GM12878 (cell line): ENCODE measurements at regions of chr6 and their contacts with region 1.

Region 1: DNA sequence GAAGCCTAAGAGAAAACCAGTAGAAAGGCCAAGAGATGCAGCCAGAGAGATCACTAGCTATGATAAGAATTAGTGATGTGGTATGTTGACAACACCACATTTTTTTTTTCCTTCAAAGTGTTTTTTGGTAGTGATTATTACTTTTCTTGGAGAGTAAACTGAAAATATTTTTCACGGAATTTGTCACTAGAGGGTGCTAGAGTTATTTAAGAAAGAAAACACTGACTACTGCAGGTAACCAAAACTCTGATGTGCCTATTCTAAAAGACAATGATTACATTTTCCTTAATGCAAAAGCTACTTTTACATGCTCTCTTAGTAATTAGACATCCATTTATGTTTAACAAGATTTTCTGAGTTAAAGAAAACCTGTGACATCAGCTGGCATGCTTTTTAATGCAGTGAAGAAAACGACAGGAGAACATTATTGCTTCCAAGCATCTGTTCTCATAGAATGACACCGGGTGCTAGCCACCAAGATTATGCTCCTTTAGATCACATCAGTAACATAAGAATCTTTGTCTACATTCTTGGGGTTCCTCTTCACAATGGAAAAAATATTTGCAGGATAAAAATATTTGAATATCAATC is 28.8 kb downstream of the RWDD2A start:
- DNase-seq: no peak
- ATAC-seq: peak; percentile 65
- H3K4me3 ChIP-seq: no peak overlapping the region
- H3K27ac ChIP-seq: no peak overlapping the region
- H3K4me1 ChIP-seq: no peaks in the 10 kb centered on the region
- H3K27me3 ChIP-seq: no peaks in the 10 kb centered on the region
- CTCF ChIP-seq: peak; percentile 32 to 61 (median 32); a peak in 2 of 6 replicates
- EP300 ChIP-seq: no peak
- POLR2A ChIP-seq: no peak
- RAD21 ChIP-seq: peak; percentile 74

Region 2: DNA sequence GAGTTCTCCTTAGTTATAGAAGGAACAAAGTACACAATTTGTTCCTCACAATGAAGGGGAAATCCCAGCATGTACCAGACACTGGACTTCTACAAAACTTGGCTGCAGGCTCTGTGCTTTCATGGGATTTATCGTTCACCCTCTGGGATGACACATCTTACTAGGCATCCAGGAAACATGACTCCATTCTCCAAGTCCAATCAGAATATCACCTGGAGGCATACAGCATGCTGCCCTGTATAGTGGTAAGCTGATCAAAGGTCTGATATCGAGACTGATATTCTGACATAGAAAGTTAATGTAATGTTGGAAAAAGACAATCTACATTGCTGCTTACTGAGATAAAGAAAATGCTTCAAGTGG is 22.1 kb before region 1 on chr6:
- CTCF ChIA-PET with region 1: interaction called, 22 read pairs
- POLR2A ChIA-PET with region 1: interaction called, 3 read pairs
- RAD21 ChIA-PET with region 1: interaction called, 3 read pairs
- SMC1A ChIA-PET with region 1: interaction called, 6 read pairs
- in situ Hi-C with region 1: no loop called
- intact Hi-C with region 1: no loop called
- DNase-seq: no peak
- ATAC-seq: no peak
- H3K4me3 ChIP-seq: no peak overlapping the region
- H3K27ac ChIP-seq: no peak overlapping the region
- H3K4me1 ChIP-seq: no peaks in the 10 kb centered on the region; the same call in 1 of the 2 replicates
- H3K27me3 ChIP-seq: no peaks in the 10 kb centered on the region
- CTCF ChIP-seq: no peak
- EP300 ChIP-seq: no peak
- POLR2A ChIP-seq: no peak
- RAD21 ChIP-seq: no peak

Region 3: GRCh38 chr6:83417880-83418663 is 196.1 kb after region 1 on chr6:
- CTCF ChIA-PET with region 1: interaction called, 7 read pairs
- POLR2A ChIA-PET with region 1: no interaction called
- RAD21 ChIA-PET with region 1: interaction called, 3 read pairs
- SMC1A ChIA-PET with region 1: interaction called, 14 read pairs
- in situ Hi-C with region 1: no loop called
- intact Hi-C with region 1: loop called (anchors 1 kb)
- DNase-seq: no peak
- ATAC-seq: peak; percentile 76
- H3K4me3 ChIP-seq: no peak overlapping the region
- H3K27ac ChIP-seq: no peak overlapping the region
- H3K4me1 ChIP-seq: no peaks in the 10 kb centered on the region
- H3K27me3 ChIP-seq: no peaks in the 10 kb centered on the region
- CTCF ChIP-seq: peak; percentile 38 to 44 (median 40); a peak in 4 of 6 replicates
- EP300 ChIP-seq: no peak
- POLR2A ChIP-seq: no peak
- RAD21 ChIP-seq: peak; percentile 58

Region 4: DNA sequence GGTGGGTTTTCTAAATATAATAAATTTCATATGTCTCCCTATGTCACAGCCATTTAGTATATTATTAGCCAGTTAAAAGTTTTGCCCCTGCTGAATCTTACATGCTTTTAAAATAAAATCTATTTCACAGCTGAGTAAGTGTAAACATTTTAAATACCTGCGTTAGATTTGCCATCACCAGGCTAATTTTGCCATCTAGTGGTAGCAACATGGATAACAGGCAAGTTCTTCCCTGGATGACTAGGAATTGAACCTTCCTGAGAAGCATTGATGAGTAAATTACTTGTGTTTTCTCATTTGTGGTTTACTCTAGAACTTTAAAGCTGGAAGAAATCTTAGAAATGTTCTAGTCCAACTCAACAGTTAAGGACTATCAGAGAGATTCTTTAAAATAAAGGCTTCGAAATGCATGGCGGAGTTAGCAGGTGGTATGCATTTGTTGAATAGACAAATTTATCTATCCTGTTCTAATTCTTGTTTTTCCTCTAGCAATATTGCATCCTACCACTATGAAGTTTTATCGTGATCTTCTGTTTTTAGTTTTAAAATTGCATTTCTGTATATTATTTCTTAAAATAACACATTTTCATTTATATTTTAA is 293.0 kb after region 1 on chr6:
- CTCF ChIA-PET with region 1: interaction called, 423 read pairs
- POLR2A ChIA-PET with region 1: interaction called, 3 read pairs
- RAD21 ChIA-PET with region 1: interaction called, 103 read pairs
- SMC1A ChIA-PET with region 1: interaction called, 158 read pairs
- in situ Hi-C with region 1: loop called (anchors 5 kb)
- intact Hi-C with region 1: loop called (anchors 1 kb)
- DNase-seq: peak; percentile 30
- ATAC-seq: peak; percentile 74
- H3K4me3 ChIP-seq: no peak overlapping the region
- H3K27ac ChIP-seq: no peak overlapping the region
- H3K4me1 ChIP-seq: no peaks in the 10 kb centered on the region
- H3K27me3 ChIP-seq: no peaks in the 10 kb centered on the region; a peak in 1 of 4 replicates
- CTCF ChIP-seq: peak; percentile 72 to 82 (median 76)
- EP300 ChIP-seq: no peak
- POLR2A ChIP-seq: no peak
- RAD21 ChIP-seq: peak; percentile 96

Region 5: DNA sequence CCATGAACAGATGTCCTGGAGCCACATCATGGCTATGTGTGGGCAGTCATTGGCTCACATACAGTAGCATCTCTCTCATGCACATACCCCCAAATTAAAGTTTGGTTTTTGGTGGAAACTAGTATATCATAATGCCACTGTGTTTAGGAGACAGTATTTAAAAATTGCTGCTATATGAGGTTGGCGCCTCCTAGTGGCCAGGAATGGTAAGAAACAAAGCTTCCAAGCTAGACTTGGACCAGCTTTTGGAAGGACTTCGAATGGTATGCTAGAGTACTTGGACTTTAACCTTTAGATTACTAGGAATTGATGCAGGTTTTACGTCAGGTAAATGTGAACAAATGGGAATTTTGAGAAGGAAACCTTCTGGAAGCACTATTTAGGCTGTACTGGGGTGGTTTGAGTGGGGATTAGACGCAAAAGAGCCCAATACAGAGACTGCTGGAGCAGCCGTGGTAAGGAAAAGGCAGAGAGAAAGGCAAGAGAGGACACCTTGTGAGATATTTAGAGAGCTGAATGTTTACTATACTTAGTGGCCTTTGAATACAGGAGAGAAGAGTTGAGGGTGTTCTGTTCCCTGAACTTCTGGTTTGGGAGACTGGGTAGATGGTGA is 314.2 kb after region 1 on chr6:
- CTCF ChIA-PET with region 1: interaction called, 19 read pairs
- POLR2A ChIA-PET with region 1: interaction called, 6 read pairs
- RAD21 ChIA-PET with region 1: interaction called, 14 read pairs
- SMC1A ChIA-PET with region 1: interaction called, 21 read pairs
- in situ Hi-C with region 1: no loop called
- intact Hi-C with region 1: no loop called
- DNase-seq: peak; percentile 8
- ATAC-seq: peak; percentile 86
- H3K4me3 ChIP-seq: no peak overlapping the region
- H3K27ac ChIP-seq: no peak overlapping the region
- H3K4me1 ChIP-seq: no peaks in the 10 kb centered on the region
- H3K27me3 ChIP-seq: no peaks in the 10 kb centered on the region
- CTCF ChIP-seq: peak; percentile 71 to 89 (median 87)
- EP300 ChIP-seq: no peak
- POLR2A ChIP-seq: no peak
- RAD21 ChIP-seq: peak; percentile 53

Region 6: DNA sequence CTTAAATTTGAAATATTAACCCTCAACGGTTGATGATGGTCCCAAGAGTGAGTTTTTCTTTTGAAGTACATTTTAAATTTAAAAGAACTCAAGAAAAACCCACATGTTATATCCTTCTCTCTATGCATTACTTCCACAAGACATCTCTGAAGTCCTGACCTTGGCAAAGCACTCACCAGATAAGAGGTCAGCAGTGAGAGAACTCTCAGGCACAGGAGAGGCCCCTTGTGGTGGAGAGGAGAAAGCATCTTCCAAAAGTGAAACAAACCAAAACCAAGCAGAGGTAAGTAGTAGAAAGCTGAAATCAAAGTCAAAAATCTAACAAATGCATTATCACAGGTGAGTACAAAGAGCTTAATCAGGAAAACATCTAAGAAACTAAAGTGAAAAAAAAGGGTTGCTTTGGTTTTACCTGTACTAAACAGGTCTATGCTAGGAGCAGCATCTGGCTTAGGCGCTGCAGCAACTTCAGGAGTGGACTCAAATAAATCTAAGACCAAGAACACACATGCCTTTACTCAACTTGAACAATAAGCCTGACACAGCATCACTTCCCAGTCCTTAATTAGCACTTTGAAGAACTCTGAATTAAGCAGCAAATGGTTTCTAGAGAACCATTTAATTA is 370.9 kb after region 1 on chr6:
- CTCF ChIA-PET with region 1: no interaction called
- POLR2A ChIA-PET with region 1: no interaction called
- RAD21 ChIA-PET with region 1: interaction called, 3 read pairs
- SMC1A ChIA-PET with region 1: interaction called, 3 read pairs
- in situ Hi-C with region 1: no loop called
- intact Hi-C with region 1: loop called (anchors 10 kb)
- DNase-seq: peak; percentile 9
- ATAC-seq: peak; percentile 99
- H3K4me3 ChIP-seq: no peak overlapping the region
- H3K27ac ChIP-seq: no peak overlapping the region
- H3K4me1 ChIP-seq: no peaks in the 10 kb centered on the region
- H3K27me3 ChIP-seq: no peaks in the 10 kb centered on the region
- CTCF ChIP-seq: peak; percentile 57 to 83 (median 70)
- EP300 ChIP-seq: no peak
- POLR2A ChIP-seq: no peak
- RAD21 ChIP-seq: peak; percentile 52